Panc1 (cell line): ENCODE measurements at regions of chr2 and their contacts with region 1.

Region 1: DNA sequence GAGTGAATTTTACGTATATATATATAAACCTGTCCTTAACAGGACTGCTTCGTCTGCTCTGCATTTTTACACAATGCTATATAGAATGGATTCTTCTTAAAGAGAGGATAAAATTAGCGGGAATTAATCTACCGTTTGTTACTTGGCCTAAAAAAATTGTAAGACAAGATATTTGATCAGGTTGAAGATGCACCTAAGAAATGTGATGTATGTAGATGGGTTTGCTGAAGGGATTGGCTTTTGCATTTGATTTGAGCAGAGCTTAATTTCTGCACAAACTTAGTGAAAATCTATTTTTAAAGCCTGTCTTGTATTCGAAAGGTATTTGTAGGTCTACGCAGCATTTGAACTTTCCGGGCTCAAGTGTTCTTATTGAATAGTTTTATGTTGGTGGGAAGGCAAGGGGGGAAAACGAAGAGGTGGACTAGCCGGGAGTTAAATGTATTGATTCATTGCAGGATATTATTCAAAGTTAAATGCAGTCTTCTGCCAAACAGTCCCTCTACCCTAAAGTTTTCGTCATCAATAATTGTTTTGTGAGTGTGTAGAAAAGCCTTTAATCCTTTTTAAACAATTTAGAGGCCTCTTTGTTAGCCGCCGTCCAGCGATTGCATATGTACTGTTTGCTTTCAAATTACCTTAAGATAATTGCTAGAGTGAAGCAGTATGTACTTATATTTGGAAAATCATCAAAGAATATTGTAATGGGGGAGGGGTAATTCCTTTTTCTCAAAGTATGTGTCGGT is 1.2 kb downstream of the PPP1CB start:
- DNase-seq: no peak
- ATAC-seq: no peak
- H3K4me3 ChIP-seq: peak overlapping the region; percentile 90 to 98
- H3K27ac ChIP-seq: peak overlapping the region; percentile 92
- H3K4me1 ChIP-seq: peaks cover 38% of the 10 kb centered on the region
- H3K27me3 ChIP-seq: no peaks in the 10 kb centered on the region
- CTCF ChIP-seq: no peak

Region 2: GRCh38 chr2:28566521-28567041 is 186.2 kb before region 1 on chr2:
- CTCF ChIA-PET with region 1: interaction called, 5 read pairs
- POLR2A ChIA-PET with region 1: no interaction called
- in situ Hi-C with region 1: no loop called
- intact Hi-C with region 1: loop called (anchors 1 kb)
- DNase-seq: no peak
- ATAC-seq: peak; percentile 95
- H3K4me3 ChIP-seq: peak overlapping the region; percentile 52 to 77
- H3K27ac ChIP-seq: peak overlapping the region; percentile 71
- H3K4me1 ChIP-seq: no peaks in the 10 kb centered on the region
- H3K27me3 ChIP-seq: no peaks in the 10 kb centered on the region
- CTCF ChIP-seq: peak; percentile 100